ENCODE measurements at regions of chr7 and their contacts with region 1.

Region 1: DNA sequence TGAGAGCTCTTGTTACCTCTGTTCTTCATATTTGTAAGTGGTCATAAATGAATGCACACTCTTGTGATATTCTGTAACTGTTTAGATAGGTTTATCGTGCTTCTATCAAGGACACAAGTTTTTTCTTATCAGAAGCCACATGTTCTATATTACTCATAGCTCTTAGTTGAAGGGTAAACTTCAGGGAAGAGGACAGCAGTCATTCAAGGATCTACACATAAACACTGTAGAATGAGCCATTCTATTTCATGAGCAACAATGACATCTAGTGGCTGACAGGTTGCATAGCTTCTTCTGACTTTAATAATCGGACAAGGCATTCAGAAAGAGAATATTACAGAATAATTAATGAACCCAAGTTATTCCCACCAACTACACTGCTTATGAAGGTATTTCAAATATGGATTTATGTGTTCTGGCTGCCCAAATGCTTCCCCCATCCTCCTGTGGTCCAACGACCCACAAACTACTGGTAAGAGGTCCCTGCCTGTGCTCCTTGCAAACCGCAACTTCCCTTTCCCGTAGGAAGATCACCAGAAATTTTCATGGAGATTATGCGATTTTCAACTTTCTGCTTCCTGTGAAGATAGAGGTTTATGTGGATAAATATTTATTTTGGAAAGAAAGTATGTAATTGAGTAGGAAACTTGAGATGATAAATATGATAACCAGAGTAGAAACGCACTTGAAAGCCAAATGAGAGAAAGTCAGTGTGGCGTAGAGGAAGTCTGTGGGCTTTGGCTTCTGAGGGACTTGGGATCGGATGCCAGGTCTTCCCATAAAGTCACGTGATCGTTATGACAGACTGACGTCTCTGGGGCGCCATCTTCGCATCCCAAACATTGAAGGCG is 16.8 kb upstream of the ABCB5 start:
- DNase-seq: peak; percentile 95
- H3K4me3 ChIP-seq: peak overlapping the region in 2 of 3 experiments; percentile 2 to 14
- H3K27ac ChIP-seq: peak overlapping the region; percentile 44
- H3K4me1 ChIP-seq: peaks cover 47% of the 10 kb centered on the region
- H3K27me3 ChIP-seq: no peaks in the 10 kb centered on the region
- CTCF ChIP-seq: peak; percentile 53 to 63
- POLR2A ChIP-seq: no peak

Region 2: GRCh38 chr7:19708397-19709248 is 890.1 kb before region 1 on chr7 and contains the start of gene POLR1F:
- CTCF ChIA-PET with region 1: interaction called, 354 read pairs
- POLR2A ChIA-PET with region 1: no interaction called
- dilution Hi-C with region 1: no loop called
- intact Hi-C with region 1: loop called (anchors 1 kb)
- DNase-seq: peak; percentile 97
- H3K4me3 ChIP-seq: peak within 1 kb of the TSS; percentile 45 to 83 (median 77)
- H3K27ac ChIP-seq: peak within 1 kb of the TSS; percentile 44
- H3K4me1 ChIP-seq: peaks cover 19% of the 10 kb centered on the region
- H3K27me3 ChIP-seq: peaks cover 0 to 12% of the 10 kb centered on the region in 2 experiments
- CTCF ChIP-seq: peak; percentile 88 to 92
- POLR2A ChIP-seq: peak; percentile 92
- total RNA-seq, gene POLR1F: 21.0 and 27.0 TPM in 2 replicates

Region 3: DNA sequence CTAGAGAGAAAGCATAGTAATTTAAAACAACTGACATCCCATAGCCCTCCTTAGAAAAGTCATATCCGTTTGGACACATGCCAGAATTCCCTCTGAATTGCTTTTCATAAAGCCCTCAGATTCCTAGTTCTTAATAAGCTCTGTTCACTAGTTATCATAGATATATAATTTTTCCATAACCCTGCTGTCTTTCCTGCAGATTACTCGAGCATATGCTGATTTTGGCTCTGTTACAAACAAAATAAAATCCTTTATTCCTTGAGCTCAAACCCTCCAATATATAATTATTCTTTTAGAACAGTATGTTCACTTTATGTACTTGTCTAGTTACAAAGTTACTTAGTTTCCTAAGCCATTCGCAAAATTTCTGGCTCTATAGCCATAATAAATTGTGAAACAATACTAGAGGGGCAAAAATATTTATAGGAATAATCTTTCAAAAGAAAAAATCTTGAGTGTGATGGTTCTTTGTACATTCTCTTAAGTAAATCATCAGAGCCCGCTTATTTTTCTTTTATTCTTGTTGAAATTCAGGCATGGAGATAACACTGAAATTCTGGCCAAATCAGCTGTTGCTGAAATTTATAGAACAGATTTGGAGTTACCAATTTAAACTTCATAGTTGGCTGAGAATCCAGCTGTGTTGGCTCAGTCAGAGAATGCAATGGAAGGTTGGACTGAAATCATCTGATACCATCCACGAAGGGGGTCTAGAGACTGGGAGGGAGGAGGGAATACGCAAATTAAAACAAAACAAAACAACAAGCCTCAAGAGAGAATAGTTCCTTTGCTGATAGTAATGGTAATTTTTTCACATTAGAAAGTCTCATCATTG is 679.2 kb before region 1 on chr7:
- CTCF ChIA-PET with region 1: interaction called, 8 read pairs
- POLR2A ChIA-PET with region 1: no interaction called
- dilution Hi-C with region 1: no loop called
- intact Hi-C with region 1: loop called (anchors 2 kb)
- DNase-seq: peak; percentile 80
- H3K4me3 ChIP-seq: no peak overlapping the region
- H3K27ac ChIP-seq: peak overlapping the region; percentile 66
- H3K4me1 ChIP-seq: peaks cover 42% of the 10 kb centered on the region
- H3K27me3 ChIP-seq: no peaks in the 10 kb centered on the region
- CTCF ChIP-seq: no peak
- POLR2A ChIP-seq: no peak

Region 4: GRCh38 chr7:20219446-20220292 is 379.0 kb before region 1 on chr7:
- CTCF ChIA-PET with region 1: interaction called, 12 read pairs
- POLR2A ChIA-PET with region 1: interaction called, 3 read pairs
- dilution Hi-C with region 1: no loop called
- intact Hi-C with region 1: loop called (anchors 1 kb)
- DNase-seq: peak; percentile 95
- H3K4me3 ChIP-seq: no peak overlapping the region
- H3K27ac ChIP-seq: peak overlapping the region; percentile 83
- H3K4me1 ChIP-seq: peaks cover 21% of the 10 kb centered on the region
- H3K27me3 ChIP-seq: no peaks in the 10 kb centered on the region
- CTCF ChIP-seq: no peak
- POLR2A ChIP-seq: peak; percentile 78

Region 5: GRCh38 chr7:20236790-20237189 is 361.9 kb before region 1 on chr7:
- CTCF ChIA-PET with region 1: no interaction called
- POLR2A ChIA-PET with region 1: no interaction called
- dilution Hi-C with region 1: no loop called
- intact Hi-C with region 1: no loop called
- DNase-seq: no peak
- H3K4me3 ChIP-seq: no peak overlapping the region
- H3K27ac ChIP-seq: no peak overlapping the region
- H3K4me1 ChIP-seq: no peaks in the 10 kb centered on the region
- H3K27me3 ChIP-seq: no peaks in the 10 kb centered on the region
- CTCF ChIP-seq: no peak
- POLR2A ChIP-seq: no peak

Region 6: DNA sequence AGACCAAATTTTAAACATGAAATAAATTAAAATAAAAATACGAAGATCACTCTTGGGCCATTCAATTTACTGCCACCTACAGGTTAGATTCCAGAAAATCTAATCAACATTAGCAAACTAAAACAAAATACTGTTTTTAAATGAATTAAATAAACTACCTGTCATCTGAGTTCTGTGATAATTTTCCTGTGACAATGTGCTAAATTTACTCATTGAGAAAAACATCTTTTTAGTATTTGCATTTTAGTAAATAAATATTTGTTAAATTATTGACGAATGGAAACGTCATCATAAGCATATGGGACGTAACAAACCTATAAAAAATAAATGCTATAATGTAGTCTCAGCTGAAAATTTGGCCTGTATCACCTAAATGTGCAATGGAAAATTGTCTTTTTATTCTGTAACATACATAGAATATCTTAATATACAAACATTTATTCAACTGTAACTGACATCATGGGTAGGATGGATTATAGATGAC is 195.9 kb before region 1 on chr7:
- CTCF ChIA-PET with region 1: interaction called, 24 read pairs
- POLR2A ChIA-PET with region 1: no interaction called
- dilution Hi-C with region 1: no loop called
- intact Hi-C with region 1: loop called (anchors 2 kb)
- DNase-seq: no peak
- H3K4me3 ChIP-seq: no peak overlapping the region
- H3K27ac ChIP-seq: no peak overlapping the region
- H3K4me1 ChIP-seq: peaks cover 16% of the 10 kb centered on the region
- H3K27me3 ChIP-seq: no peaks in the 10 kb centered on the region
- CTCF ChIP-seq: peak; percentile 23 to 31
- POLR2A ChIP-seq: no peak

Region 7: DNA sequence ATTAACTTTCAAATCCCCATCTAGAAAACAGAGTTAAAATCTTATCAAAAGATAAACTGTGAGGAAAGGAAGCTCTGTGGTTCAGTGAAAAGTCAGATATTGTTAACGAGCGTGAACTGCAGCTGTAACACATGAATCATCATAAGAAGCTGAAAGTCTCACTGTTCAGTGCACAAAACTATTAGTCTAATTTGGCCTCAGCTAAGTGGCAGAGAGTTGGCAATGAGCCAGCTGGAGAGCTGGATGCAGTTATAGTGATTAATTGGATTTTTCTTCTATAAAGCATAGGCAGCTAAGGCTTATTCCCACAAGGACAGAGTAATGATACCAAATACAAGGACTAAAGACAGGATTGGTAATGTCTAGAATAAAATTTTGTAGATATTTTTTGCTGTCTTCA is 84.3 kb before region 1 on chr7:
- CTCF ChIA-PET with region 1: interaction called, 26 read pairs
- POLR2A ChIA-PET with region 1: no interaction called
- dilution Hi-C with region 1: no loop called
- intact Hi-C with region 1: loop called (anchors 1 kb)
- DNase-seq: peak; percentile 98
- H3K4me3 ChIP-seq: no peak overlapping the region
- H3K27ac ChIP-seq: peak overlapping the region; percentile 74
- H3K4me1 ChIP-seq: peaks cover 33% of the 10 kb centered on the region
- H3K27me3 ChIP-seq: no peaks in the 10 kb centered on the region
- CTCF ChIP-seq: no peak
- POLR2A ChIP-seq: no peak

Region 8: GRCh38 chr7:20945451-20945850 is 346.8 kb after region 1 on chr7:
- CTCF ChIA-PET with region 1: no interaction called
- POLR2A ChIA-PET with region 1: no interaction called
- dilution Hi-C with region 1: no loop called
- intact Hi-C with region 1: no loop called
- DNase-seq: no peak
- H3K4me3 ChIP-seq: no peak overlapping the region
- H3K27ac ChIP-seq: no peak overlapping the region
- H3K4me1 ChIP-seq: no peaks in the 10 kb centered on the region
- H3K27me3 ChIP-seq: no peaks in the 10 kb centered on the region
- CTCF ChIP-seq: no peak
- POLR2A ChIP-seq: no peak